Kidney (tissue), 22 donors: ENCODE measurements at regions of chr4 and their contacts with region 1.

Region 1: DNA sequence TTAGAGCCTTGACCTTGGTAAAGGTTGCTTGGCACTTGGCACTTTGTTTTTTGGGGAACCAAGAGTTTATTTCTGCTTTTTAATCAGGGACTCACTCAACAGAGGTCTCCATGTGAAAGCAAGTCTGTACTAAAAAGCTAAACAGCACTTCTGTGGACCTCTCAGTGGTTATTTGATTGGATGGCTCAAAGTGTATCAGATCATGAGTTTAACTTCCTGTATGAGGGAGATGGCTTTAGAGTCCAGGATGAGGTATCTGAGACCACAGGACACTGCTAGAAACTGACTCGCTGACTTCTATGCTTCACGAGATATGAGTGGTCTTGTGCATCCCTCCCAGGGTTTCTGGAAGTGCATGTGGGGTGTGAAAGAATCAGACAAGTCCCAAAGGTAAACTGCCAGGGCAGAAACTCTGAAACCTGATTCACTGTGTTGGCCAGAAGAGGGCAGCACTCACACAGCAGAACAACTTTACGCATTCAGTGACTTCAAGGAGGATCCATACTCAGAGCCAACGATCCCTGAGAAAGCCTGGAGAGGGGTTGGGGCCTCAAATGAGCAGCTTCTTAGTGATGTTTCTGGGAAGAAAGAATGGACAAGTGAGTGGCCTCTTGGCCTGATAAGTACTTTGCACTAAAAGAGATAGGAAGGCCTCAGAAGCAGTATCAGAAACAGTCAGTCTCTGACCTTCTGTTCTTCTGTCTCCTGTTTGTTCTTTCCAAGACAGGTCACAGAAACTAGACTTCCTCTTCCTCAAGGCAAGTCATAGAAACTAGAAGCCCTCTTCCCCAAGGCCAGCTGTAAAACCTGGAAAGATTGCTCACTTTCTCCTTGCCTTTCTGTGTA is 220.3 kb upstream of the CXCL13 start:
- DNase-seq: peak; percentile 62 to 89 (median 69)
- H3K4me3 ChIP-seq: no peak overlapping the region
- H3K27ac ChIP-seq: no peak overlapping the region
- H3K4me1 ChIP-seq: no peaks in the 10 kb centered on the region
- H3K27me3 ChIP-seq: no peaks in the 10 kb centered on the region
- CTCF ChIP-seq: peak; percentile 91

Region 2: GRCh38 chr4:77156533-77156911 is 228.8 kb before region 1 on chr4:
- intact Hi-C with region 1: no loop called
- DNase-seq: peak; percentile 98 to 100 (median 99)
- H3K4me3 ChIP-seq: peak overlapping the region; percentile 68 to 93 (median 88)
- H3K27ac ChIP-seq: peak overlapping the region; percentile 95 to 96
- H3K4me1 ChIP-seq: peaks cover 2 to 4% (median 4%) of the 10 kb centered on the region in 3 donors
- H3K27me3 ChIP-seq: no peaks in the 10 kb centered on the region
- CTCF ChIP-seq: no peak

Region 3: DNA sequence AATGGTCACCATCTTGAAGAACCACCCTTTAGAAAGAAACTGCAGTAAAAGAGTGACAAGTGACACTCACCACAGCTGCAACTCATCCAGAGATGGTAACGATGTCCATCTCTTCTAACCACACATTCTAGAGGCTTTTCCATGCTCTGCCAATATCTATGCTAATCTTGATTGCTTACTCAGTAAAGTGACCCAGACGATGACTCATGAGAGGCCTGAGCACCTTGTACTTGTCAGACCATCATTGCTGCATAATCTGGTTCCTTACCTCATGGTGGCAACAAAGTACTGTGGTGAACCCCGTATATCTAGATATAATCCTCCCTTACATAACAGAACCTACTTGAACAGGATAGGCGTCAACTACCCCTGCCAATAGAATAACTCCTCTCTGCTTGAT is 152.7 kb before region 1 on chr4:
- intact Hi-C with region 1: no loop called
- DNase-seq: no peak
- H3K4me3 ChIP-seq: no peak overlapping the region
- H3K27ac ChIP-seq: no peak overlapping the region
- H3K4me1 ChIP-seq: no peaks in the 10 kb centered on the region
- H3K27me3 ChIP-seq: no peaks in the 10 kb centered on the region
- CTCF ChIP-seq: no peak

Region 4: GRCh38 chr4:77443941-77444340 is 58.6 kb after region 1 on chr4:
- intact Hi-C with region 1: no loop called
- DNase-seq: no peak
- H3K4me3 ChIP-seq: no peak overlapping the region
- H3K27ac ChIP-seq: no peak overlapping the region
- H3K4me1 ChIP-seq: no peaks in the 10 kb centered on the region
- H3K27me3 ChIP-seq: no peaks in the 10 kb centered on the region
- CTCF ChIP-seq: no peak

Region 5: GRCh38 chr4:77600521-77601451 is 215.4 kb after region 1 on chr4:
- intact Hi-C with region 1: loop called (anchors 10 kb)
- DNase-seq: peak in 3 of 5 donors; percentile 25 to 53 (median 43)
- H3K4me3 ChIP-seq: no peak overlapping the region
- H3K27ac ChIP-seq: no peak overlapping the region
- H3K4me1 ChIP-seq: no peaks in the 10 kb centered on the region
- H3K27me3 ChIP-seq: no peaks in the 10 kb centered on the region
- CTCF ChIP-seq: peak; percentile 77